MCF 10A (cell line): ENCODE measurements at regions of chr10 and their contacts with region 1.

Region 1: DNA sequence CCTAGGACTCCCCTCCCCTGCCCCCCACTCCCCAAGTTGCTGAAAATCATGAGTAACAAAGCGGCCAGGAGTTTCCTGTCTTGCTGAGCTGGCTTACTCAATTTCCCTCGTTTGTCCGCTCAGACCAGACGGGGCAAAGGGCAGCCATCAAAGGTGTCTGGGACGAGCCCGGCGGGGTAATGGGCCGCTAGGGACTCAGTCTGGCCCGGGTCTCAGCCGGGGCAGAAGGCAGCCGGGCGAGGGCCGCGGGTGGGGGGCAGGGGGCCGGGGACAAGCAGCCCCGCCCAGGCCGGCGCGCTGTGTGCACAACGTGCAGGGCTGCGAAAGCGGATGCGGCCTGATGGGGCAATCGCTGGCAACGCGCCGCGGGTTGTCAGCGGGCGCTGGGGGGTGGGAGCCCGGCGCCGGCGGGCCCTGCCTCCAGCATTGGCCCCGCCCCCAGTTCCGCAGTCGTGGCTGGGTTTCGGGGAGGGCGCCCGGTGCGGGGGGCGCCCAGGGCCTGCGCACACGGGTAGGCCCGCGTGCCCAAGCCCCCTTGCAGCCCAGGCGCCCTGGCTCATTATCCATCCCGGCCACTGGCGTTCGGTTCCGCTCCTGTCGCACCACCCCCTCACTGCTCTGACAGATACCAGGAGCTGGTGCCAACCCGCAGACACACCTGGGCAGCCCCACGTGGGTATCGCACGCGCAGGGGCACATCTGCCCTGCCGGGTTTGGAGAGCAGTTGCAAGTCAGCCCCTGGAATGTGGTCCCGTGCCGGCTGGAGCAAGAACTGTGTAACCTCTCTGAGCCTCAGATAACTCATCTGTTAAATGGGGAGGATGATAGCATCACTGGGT is 35.1 kb downstream of the DNAJB12 start:
- DNase-seq: peak; percentile 96
- H3K4me3 Mint-ChIP-seq: peak overlapping the region; percentile 56
- H3K27ac Mint-ChIP-seq: peak overlapping the region; percentile 95
- H3K4me1 Mint-ChIP-seq: peaks cover 47% of the 10 kb centered on the region
- H3K27me3 Mint-ChIP-seq: no peaks in the 10 kb centered on the region
- CTCF ChIP-seq: no peak

Region 2: GRCh38 chr10:72061491-72061890 is 258.1 kb before region 1 on chr10:
- CTCF ChIA-PET with region 1: no interaction called
- POLR2A ChIA-PET with region 1: no interaction called
- intact Hi-C with region 1: no loop called
- DNase-seq: no peak
- H3K4me3 Mint-ChIP-seq: no peak overlapping the region
- H3K27ac Mint-ChIP-seq: no peak overlapping the region
- H3K4me1 Mint-ChIP-seq: peaks cover 5% of the 10 kb centered on the region
- H3K27me3 Mint-ChIP-seq: peaks cover 12% of the 10 kb centered on the region
- CTCF ChIP-seq: peak; percentile 14

Region 3: DNA sequence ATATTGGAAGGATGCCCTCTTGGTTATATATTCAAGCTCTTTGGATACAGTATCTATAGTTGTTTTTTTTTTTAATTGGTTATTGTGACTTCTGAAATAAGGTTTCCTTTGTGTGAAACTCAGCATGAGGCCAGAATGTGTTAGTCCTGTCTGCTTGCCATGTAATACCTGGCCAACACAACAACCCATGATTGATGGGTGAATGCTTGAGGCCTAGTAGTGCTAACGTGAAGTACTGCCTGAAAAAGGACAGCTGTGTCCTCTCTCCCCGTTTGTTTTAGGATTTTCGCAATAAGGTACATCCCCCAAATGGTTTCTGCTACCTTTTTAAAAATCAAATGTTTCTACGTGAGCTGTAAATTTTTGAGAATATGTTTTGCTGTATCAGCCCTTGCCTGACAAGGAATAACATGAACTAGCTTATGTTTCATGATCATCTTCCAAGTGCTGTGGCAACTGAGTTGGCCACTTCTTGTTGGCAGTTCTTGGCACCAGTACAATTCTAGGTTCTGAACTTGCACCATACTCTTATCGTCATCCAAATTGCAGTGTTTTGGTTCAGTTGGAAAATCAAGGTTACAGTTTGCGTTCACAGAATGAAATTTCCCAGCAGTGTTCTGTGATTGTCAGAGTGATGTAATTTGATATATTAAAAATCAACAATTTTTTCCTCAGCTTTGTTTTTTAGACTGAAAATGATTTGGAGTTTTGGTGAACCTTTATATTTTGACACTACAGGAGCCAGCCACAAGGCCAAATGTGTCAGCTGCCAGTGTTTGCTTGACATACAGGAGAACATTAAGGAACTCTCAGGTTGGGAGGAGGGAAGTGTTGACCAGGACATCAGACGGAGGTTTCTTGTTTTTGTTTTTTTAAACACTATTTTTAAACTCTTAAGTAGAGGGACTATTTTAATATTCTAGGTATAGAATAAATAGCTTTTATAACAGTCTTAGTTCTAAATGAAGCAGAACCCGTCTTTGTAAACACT is 90.1 kb before region 1 on chr10:
- CTCF ChIA-PET with region 1: interaction called, 4 read pairs
- POLR2A ChIA-PET with region 1: interaction called, 25 read pairs
- intact Hi-C with region 1: no loop called
- DNase-seq: peak; percentile 91
- H3K4me3 Mint-ChIP-seq: no peak overlapping the region
- H3K27ac Mint-ChIP-seq: peak overlapping the region; percentile 68
- H3K4me1 Mint-ChIP-seq: peaks cover 25% of the 10 kb centered on the region
- H3K27me3 Mint-ChIP-seq: no peaks in the 10 kb centered on the region
- CTCF ChIP-seq: no peak

Region 4: DNA sequence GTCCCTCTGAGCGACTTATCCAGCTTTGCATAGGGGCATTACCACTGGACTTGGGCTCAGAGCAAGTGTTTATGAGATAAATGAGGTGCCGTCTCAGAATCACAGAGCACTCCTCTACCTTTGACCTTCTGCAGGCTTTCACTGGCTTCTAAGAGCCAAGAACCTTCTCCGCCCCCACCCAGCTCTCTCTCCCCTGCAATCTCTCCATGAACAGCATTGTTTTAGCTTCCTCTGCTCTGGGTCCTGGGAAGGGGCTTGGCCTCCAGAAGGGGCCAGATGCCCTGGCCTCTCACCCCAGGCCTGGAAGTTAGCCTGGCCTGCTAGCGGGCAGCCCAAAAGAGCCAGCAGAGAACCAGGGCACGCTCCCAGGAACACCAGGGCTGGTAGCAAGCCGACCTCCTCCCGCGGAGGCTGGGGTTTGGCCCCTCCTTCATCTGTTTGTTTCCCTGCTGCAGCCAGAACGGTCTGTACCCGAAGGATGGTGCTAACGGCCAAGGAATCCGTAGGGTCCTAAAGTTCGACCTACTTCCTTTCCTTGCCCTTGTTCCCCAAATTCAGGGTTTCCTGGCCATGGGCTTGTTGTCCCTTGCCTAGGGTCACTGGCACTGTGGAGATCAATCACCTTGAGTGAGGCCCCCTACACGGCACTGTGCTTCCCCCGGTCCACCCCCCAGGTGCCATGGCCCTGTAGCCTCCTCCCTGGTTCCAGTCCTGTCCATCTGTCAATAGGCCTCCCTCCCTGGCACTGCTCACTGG is 64.6 kb before region 1 on chr10:
- CTCF ChIA-PET with region 1: no interaction called
- POLR2A ChIA-PET with region 1: interaction called, 47 read pairs
- intact Hi-C with region 1: no loop called
- DNase-seq: peak; percentile 93
- H3K4me3 Mint-ChIP-seq: peak overlapping the region; percentile 46
- H3K27ac Mint-ChIP-seq: peak overlapping the region; percentile 88
- H3K4me1 Mint-ChIP-seq: peaks cover 48% of the 10 kb centered on the region
- H3K27me3 Mint-ChIP-seq: no peaks in the 10 kb centered on the region
- CTCF ChIP-seq: no peak

Region 5: GRCh38 chr10:72283131-72283530 is 36.5 kb before region 1 on chr10:
- CTCF ChIA-PET with region 1: interaction called, 7 read pairs
- POLR2A ChIA-PET with region 1: interaction called, 383 read pairs
- intact Hi-C with region 1: no loop called
- DNase-seq: no peak
- H3K4me3 Mint-ChIP-seq: no peak overlapping the region
- H3K27ac Mint-ChIP-seq: no peak overlapping the region
- H3K4me1 Mint-ChIP-seq: peaks cover 10% of the 10 kb centered on the region
- H3K27me3 Mint-ChIP-seq: no peaks in the 10 kb centered on the region
- CTCF ChIP-seq: no peak

Region 6: DNA sequence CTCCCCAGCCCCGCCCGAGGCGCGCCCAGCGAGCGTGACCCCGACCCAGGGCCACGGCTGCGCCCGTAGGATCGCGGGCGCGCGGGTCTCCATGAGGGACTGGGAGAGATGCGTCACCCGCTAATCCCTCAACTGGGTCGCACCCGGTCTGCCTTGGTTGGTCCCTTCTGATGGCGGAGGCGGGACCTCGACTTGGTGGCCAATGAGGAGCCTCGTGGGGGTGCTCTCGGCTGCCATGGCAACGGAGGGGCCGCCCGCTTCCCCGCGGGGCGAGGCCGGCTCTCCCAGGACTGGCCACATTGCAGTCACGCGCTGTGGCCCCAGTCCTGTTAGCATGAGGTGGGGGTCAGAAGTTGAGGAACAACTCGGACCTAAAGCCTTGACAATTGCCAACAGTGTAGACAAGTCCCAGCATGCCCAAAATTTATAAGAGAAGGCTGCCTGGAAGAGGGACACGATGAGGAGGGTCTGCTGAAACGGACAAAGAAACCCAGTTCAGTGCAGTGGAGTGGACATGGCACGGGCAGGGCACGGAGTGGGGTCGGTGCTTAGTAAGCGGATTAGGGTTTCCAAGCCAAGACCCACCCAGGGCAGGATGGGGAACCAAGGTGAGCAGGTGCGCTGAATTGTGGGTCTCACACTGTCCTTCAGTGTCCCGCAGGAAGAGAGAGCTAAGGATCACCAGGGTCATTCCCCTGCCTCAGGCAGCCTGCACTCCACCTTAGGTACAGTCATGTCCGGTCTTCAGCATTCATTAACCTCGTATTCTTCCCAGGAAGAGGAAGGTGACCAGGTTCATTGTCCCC is 21.5 kb before region 1 on chr10:
- CTCF ChIA-PET with region 1: interaction called, 4 read pairs
- POLR2A ChIA-PET with region 1: interaction called, 37 read pairs
- intact Hi-C with region 1: loop called (anchors 2 kb)
- DNase-seq: peak; percentile 98
- H3K4me3 Mint-ChIP-seq: peak overlapping the region; percentile 73
- H3K27ac Mint-ChIP-seq: peak overlapping the region; percentile 89
- H3K4me1 Mint-ChIP-seq: peaks cover 13% of the 10 kb centered on the region
- H3K27me3 Mint-ChIP-seq: no peaks in the 10 kb centered on the region
- CTCF ChIP-seq: no peak

Region 7: DNA sequence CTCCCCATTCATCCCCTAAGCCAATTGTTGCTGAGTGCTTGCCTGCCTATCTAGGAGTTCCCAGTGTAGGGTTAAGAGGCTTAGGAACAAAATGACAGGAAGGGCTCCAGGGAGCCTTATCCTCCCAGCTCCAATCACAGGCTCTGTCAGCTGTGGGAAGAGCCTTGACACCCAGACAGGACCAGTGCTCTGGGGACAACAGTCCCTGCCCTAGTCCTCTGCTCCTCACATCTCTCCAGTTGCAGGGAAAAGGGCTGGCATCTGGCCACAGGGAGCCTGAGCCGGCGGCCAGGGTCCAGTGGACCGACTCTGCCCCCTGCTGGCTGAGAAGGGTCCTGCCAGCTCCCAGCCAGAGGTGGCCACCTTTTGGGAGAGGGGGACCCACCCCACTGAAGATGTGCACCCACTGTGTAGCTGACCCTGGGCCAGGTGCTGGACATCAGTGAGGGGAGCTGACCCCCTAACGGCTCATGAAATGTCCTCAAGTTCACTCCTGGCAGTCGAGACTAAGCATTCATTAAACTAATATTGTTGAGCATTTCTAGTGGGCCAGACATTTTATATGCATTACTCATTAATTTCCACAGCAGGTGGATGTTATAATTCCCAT is 17.5 kb after region 1 on chr10:
- CTCF ChIA-PET with region 1: interaction called, 11 read pairs
- POLR2A ChIA-PET with region 1: interaction called, 249 read pairs
- intact Hi-C with region 1: loop called (anchors 1 kb)
- DNase-seq: peak; percentile 93
- H3K4me3 Mint-ChIP-seq: peak overlapping the region; percentile 72
- H3K27ac Mint-ChIP-seq: peak overlapping the region; percentile 79
- H3K4me1 Mint-ChIP-seq: peaks cover 42% of the 10 kb centered on the region
- H3K27me3 Mint-ChIP-seq: no peaks in the 10 kb centered on the region
- CTCF ChIP-seq: peak; percentile 96

Region 8: GRCh38 chr10:72665925-72666324 is 346.3 kb after region 1 on chr10:
- CTCF ChIA-PET with region 1: no interaction called
- POLR2A ChIA-PET with region 1: no interaction called
- intact Hi-C with region 1: no loop called
- DNase-seq: peak; percentile 8
- H3K4me3 Mint-ChIP-seq: no peak overlapping the region
- H3K27ac Mint-ChIP-seq: no peak overlapping the region
- H3K4me1 Mint-ChIP-seq: no peaks in the 10 kb centered on the region
- H3K27me3 Mint-ChIP-seq: no peaks in the 10 kb centered on the region
- CTCF ChIP-seq: no peak